Activated naive CD4-positive, alpha-beta T cell treated with anti-CD3 and anti-CD28 coated beads for 36 hours (primary cell): ENCODE measurements at regions of chr12 and their contacts with region 1.

Region 1: DNA sequence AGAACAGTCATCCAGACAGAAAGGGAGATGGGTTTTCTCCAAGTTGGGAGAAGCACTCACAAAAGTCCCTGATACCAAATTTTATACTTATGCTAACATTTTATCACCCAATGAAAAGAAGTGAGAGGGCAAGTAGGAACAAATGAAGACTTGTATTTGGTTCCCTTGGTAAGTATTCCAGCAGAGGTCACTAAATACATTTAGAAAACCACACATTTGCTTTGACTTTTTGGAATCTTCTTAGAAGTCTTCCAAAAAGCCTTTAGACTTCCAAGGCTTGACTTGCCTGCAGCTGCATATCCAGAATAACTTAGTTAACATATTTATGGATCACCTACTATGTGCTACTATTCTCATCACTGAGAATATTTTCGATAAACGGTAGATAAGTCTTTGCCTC is 3.1 kb upstream of the GYS2 start:
- DNase-seq: no peak
- H3K4me3 Mint-ChIP-seq: no peak overlapping the region
- H3K27ac Mint-ChIP-seq: no peak overlapping the region
- H3K4me1 Mint-ChIP-seq: peaks cover 5% of the 10 kb centered on the region
- H3K27me3 Mint-ChIP-seq: no peaks in the 10 kb centered on the region

Region 2: DNA sequence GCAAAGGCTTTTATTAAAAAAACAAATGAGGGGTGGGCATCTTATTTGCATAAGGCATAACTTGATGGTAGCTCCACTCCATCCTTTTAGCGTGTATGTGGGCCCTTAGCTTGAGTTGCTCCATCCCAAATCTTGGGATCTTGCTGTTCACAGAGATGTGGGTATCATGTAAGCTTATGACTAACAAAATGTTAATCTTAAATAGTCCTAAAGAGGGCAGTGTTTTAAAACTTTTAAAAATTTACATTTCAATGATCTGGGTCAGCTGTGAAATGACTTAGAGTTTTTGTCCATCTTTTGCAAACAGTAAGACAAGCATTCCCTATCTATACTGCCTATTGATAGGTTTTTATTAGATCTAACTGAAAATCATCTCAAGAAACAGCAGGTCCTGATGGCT is 359.0 kb before region 1 on chr12:
- CTCF ChIA-PET with region 1: no interaction called
- intact Hi-C with region 1: loop called (anchors 5 kb)
- DNase-seq: no peak
- H3K4me3 Mint-ChIP-seq: no peak overlapping the region
- H3K27ac Mint-ChIP-seq: no peak overlapping the region
- H3K4me1 Mint-ChIP-seq: no peaks in the 10 kb centered on the region
- H3K27me3 Mint-ChIP-seq: no peaks in the 10 kb centered on the region

Region 3: DNA sequence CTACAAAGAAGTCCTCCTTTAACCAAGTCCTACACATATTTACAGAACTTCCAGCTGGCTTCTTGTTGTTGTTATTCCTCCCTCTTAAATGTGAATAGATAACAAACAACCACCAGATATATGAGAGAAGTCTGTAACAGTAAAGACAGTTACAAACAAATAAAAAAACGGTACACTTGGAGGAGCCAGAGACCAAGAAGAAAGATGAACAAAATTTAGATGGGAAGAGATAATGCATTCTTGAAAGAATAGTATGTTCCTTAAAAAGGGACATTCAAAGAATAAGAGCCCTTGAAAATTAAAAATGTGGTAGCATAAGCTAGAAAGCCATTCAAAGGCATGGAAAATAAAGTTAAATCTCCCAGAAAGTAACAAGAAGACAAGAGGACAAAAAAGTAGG is 298.9 kb before region 1 on chr12:
- CTCF ChIA-PET with region 1: interaction called, 3 read pairs
- intact Hi-C with region 1: loop called (anchors 5 kb)
- DNase-seq: no peak
- H3K4me3 Mint-ChIP-seq: no peak overlapping the region
- H3K27ac Mint-ChIP-seq: no peak overlapping the region
- H3K4me1 Mint-ChIP-seq: no peaks in the 10 kb centered on the region
- H3K27me3 Mint-ChIP-seq: peaks cover 2% of the 10 kb centered on the region

Region 4: DNA sequence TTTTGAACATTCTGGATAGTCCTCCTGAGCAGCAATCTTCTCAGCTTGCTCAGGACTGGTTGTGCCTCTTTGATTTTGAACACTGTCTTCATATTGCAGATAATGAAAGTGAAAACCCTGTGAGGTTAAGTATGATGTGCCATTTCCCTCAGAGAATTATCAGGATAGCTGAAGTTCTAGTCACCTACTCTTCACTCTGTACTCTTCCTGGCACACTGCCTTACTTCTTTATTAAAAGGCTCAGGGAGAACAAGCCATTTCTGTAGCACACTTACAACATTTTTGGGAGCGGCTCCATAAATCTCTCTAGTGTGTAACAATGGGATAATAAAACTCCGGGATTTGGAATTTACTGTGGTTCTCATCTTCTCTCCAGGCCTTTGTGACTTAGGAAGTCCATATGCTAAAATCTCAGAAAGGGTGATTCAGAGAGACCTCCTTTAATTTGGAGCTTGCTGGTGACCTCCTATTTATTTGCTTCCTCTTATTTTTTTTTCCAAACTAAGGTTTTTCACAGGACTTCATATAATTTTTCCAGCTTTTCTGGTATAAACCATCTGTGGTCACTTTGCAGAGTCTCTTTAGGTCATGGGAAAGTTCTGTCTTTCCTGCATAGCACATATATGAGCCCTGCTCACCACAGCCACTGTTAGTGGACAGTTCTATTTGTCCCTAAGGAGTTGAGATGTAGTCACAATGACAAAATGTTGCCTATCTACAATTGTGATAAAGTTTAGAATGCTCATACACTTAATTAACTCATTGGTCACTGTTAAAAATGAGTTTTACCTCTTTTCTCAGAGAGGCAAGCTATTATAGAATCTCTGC is 103.5 kb after region 1 on chr12:
- CTCF ChIA-PET with region 1: no interaction called
- intact Hi-C with region 1: no loop called
- DNase-seq: no peak
- H3K4me3 Mint-ChIP-seq: no peak overlapping the region
- H3K27ac Mint-ChIP-seq: no peak overlapping the region
- H3K4me1 Mint-ChIP-seq: no peaks in the 10 kb centered on the region
- H3K27me3 Mint-ChIP-seq: peaks cover 6% of the 10 kb centered on the region

Region 5: DNA sequence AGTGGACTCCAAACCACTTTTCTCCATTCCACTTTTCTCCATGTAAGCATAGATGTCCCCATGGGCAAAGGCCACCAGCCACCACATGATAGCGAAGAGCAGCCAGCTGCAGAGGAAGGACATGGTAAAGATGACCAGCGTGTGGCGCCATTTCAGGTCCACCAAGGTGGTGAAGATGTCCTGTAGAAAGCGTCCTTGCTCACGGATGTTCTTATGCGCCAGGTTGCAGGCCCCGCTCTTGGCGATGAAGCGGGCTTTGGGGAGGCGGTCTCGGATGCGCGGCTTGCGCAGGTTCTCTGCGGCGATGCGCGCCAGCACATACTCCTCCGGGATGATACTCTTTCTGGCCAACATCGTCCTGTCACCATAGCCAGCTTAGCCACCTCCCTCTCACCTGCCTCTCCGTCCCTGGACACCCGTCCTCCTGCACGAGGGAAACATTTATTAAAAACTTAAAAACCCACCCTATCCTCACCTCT is 165.6 kb after region 1 on chr12:
- CTCF ChIA-PET with region 1: no interaction called
- intact Hi-C with region 1: loop called (anchors 5 kb)
- DNase-seq: peak; percentile 38
- H3K4me3 Mint-ChIP-seq: peak overlapping the region; percentile 27
- H3K27ac Mint-ChIP-seq: no peak overlapping the region
- H3K4me1 Mint-ChIP-seq: peaks cover 10% of the 10 kb centered on the region
- H3K27me3 Mint-ChIP-seq: peaks cover 37% of the 10 kb centered on the region

Region 6: GRCh38 chr12:22018860-22019259 is 411.2 kb after region 1 on chr12:
- CTCF ChIA-PET with region 1: no interaction called
- intact Hi-C with region 1: loop called (anchors 5 kb)
- DNase-seq: no peak
- H3K4me3 Mint-ChIP-seq: no peak overlapping the region
- H3K27ac Mint-ChIP-seq: no peak overlapping the region
- H3K4me1 Mint-ChIP-seq: no peaks in the 10 kb centered on the region
- H3K27me3 Mint-ChIP-seq: no peaks in the 10 kb centered on the region